ENCODE measurements at regions of chr2 and their contacts with region 1.

Region 1: GRCh38 chr2:204885747-204886146 is 340.5 kb downstream of the PARD3B start:
- DNase-seq: peak in 2 of 9 experiments; percentile 19 to 43
- ATAC-seq: no peak
- H3K4me3 ChIP-seq: no peak overlapping the region
- H3K4me3 Mint-ChIP-seq: no peak overlapping the region
- H3K27ac ChIP-seq: no peak overlapping the region
- H3K27ac Mint-ChIP-seq: no peak overlapping the region
- H3K4me1 ChIP-seq: peaks cover 16% of the 10 kb centered on the region
- H3K4me1 Mint-ChIP-seq: peaks cover 26% of the 10 kb centered on the region
- H3K27me3 ChIP-seq: no peaks in the 10 kb centered on the region
- H3K27me3 Mint-ChIP-seq: no peaks in the 10 kb centered on the region
- CTCF ChIP-seq: no peak

Region 2: GRCh38 chr2:204988836-204989235 is 103.1 kb after region 1 on chr2:
- CTCF ChIA-PET with region 1: no interaction called
- POLR2A ChIA-PET with region 1: no interaction called
- intact Hi-C with region 1: loop called in 1 of 2 experiments (anchors 5 kb)
- DNase-seq: no peak
- ATAC-seq: no peak
- H3K4me3 ChIP-seq: no peak overlapping the region
- H3K4me3 Mint-ChIP-seq: no peak overlapping the region
- H3K27ac ChIP-seq: no peak overlapping the region
- H3K27ac Mint-ChIP-seq: no peak overlapping the region
- H3K4me1 ChIP-seq: no peaks in the 10 kb centered on the region
- H3K4me1 Mint-ChIP-seq: peaks cover 5% of the 10 kb centered on the region
- H3K27me3 ChIP-seq: no peaks in the 10 kb centered on the region
- H3K27me3 Mint-ChIP-seq: no peaks in the 10 kb centered on the region
- CTCF ChIP-seq: no peak

Region 3: DNA sequence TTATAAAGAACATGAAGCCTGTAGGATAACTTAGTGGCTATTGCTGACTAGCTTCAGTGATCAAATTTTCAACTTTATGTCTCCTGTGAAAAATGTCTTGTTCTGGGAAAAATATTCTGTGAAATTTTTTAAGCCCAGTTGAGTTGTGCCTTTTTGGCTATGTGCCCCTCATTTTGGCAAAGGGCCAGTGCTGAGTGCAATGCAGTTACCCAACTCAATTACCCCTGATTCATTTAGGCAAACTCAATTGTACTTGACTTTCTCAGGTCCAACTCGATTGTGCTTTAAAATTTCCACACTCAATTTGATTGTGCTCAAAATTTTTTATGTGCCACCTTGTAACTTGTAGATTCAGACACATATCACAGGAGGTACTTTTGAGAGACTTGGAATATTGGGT is 247.8 kb after region 1 on chr2:
- CTCF ChIA-PET with region 1: interaction called, 5 read pairs
- POLR2A ChIA-PET with region 1: interaction called, 3 read pairs
- intact Hi-C with region 1: loop called in 1 of 2 experiments (anchors 1 kb)
- DNase-seq: no peak
- ATAC-seq: no peak
- H3K4me3 ChIP-seq: no peak overlapping the region
- H3K4me3 Mint-ChIP-seq: no peak overlapping the region
- H3K27ac ChIP-seq: no peak overlapping the region
- H3K27ac Mint-ChIP-seq: no peak overlapping the region
- H3K4me1 ChIP-seq: peaks cover 21% of the 10 kb centered on the region
- H3K4me1 Mint-ChIP-seq: peaks cover 21% of the 10 kb centered on the region
- H3K27me3 ChIP-seq: no peaks in the 10 kb centered on the region
- H3K27me3 Mint-ChIP-seq: no peaks in the 10 kb centered on the region
- CTCF ChIP-seq: no peak

Region 4: DNA sequence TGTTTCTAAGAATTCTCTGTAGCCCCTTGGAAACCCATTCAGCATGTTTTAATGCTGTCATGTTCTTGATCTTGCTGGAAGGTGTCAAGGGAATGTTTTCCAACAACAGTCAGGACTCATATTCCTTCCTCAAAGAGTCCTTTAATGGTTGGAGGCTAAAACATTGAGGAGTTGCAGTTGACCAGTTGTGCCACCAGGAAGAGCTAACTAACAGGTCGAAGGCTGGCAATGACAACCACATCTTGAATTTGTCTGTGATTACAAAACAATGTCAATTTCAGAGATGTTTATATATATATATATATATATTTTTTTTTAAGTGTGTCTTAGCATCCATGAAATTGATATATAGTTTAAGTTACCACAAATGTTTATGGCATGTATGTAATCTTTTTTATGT is 1048.7 kb after region 1 on chr2:
- CTCF ChIA-PET with region 1: no interaction called
- POLR2A ChIA-PET with region 1: no interaction called
- intact Hi-C with region 1: loop called in 1 of 2 experiments (anchors 10 kb)
- DNase-seq: no peak
- ATAC-seq: no peak
- H3K4me3 ChIP-seq: no peak overlapping the region
- H3K4me3 Mint-ChIP-seq: no peak overlapping the region
- H3K27ac ChIP-seq: no peak overlapping the region
- H3K27ac Mint-ChIP-seq: no peak overlapping the region
- H3K4me1 ChIP-seq: no peaks in the 10 kb centered on the region
- H3K4me1 Mint-ChIP-seq: no peaks in the 10 kb centered on the region
- H3K27me3 ChIP-seq: no peaks in the 10 kb centered on the region
- H3K27me3 Mint-ChIP-seq: peaks cover 9% of the 10 kb centered on the region
- CTCF ChIP-seq: no peak

Measured in CD8-positive, alpha-beta T cell (primary cell).